CD4-positive, alpha-beta T cell (primary cell): ENCODE measurements at regions of chr11 and their contacts with region 1.

Region 1: DNA sequence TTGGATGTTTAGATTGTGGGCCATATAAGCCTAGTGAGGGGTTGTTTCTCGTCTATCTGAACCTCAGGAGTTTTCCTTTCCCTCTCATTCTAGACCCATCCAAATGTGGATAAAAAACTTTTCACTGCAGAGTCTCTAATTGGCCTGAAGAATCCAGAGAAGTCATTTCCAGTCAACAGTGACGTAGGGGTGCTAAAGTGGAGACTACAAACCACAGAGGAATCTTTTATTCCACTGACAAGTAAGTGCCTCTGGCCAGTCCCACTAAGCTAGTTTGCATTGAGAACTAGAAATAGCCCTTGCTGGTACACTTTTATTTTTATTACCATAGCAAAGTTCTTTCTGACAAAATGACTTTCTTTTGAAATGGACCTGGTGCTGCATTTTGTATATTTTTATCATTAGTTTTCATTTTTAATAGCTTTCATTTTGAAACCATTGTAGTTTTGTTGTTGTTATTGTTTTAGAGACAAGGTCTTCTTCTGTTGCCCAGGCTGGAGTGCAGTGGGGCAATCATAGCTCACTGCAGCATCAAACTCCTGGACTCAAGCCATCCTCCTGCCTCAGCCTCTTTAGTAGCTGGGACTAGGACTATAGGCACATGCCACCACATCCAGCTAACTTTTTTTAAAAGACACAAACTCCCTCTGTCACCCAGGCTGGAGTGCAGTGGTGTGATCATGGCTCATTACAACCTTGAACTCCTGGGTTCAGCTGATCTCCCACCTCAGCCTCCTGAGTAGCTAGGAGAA is 14.6 kb upstream of the PHLDB1 start:
- DNase-seq: no peak
- ATAC-seq: no peak
- H3K4me3 ChIP-seq: no peak overlapping the region
- H3K4me3 Mint-ChIP-seq: no peak overlapping the region
- H3K27ac ChIP-seq: no peak overlapping the region
- H3K27ac Mint-ChIP-seq: no peak overlapping the region
- H3K4me1 ChIP-seq: peaks cover 5% of the 10 kb centered on the region
- H3K4me1 Mint-ChIP-seq: peaks cover 16% of the 10 kb centered on the region
- H3K27me3 ChIP-seq: no peaks in the 10 kb centered on the region
- H3K27me3 Mint-ChIP-seq: no peaks in the 10 kb centered on the region
- CTCF ChIP-seq: no peak

Region 2: GRCh38 chr11:118552341-118552740 is 40.5 kb before region 1 on chr11:
- CTCF ChIA-PET with region 1: no interaction called
- POLR2A ChIA-PET with region 1: no interaction called
- intact Hi-C with region 1: no loop called
- DNase-seq: no peak
- ATAC-seq: no peak
- H3K4me3 ChIP-seq: no peak overlapping the region
- H3K4me3 Mint-ChIP-seq: no peak overlapping the region
- H3K27ac ChIP-seq: no peak overlapping the region
- H3K27ac Mint-ChIP-seq: no peak overlapping the region
- H3K4me1 ChIP-seq: no peaks in the 10 kb centered on the region
- H3K4me1 Mint-ChIP-seq: no peaks in the 10 kb centered on the region
- H3K27me3 ChIP-seq: no peaks in the 10 kb centered on the region
- H3K27me3 Mint-ChIP-seq: no peaks in the 10 kb centered on the region
- CTCF ChIP-seq: no peak

Region 3: DNA sequence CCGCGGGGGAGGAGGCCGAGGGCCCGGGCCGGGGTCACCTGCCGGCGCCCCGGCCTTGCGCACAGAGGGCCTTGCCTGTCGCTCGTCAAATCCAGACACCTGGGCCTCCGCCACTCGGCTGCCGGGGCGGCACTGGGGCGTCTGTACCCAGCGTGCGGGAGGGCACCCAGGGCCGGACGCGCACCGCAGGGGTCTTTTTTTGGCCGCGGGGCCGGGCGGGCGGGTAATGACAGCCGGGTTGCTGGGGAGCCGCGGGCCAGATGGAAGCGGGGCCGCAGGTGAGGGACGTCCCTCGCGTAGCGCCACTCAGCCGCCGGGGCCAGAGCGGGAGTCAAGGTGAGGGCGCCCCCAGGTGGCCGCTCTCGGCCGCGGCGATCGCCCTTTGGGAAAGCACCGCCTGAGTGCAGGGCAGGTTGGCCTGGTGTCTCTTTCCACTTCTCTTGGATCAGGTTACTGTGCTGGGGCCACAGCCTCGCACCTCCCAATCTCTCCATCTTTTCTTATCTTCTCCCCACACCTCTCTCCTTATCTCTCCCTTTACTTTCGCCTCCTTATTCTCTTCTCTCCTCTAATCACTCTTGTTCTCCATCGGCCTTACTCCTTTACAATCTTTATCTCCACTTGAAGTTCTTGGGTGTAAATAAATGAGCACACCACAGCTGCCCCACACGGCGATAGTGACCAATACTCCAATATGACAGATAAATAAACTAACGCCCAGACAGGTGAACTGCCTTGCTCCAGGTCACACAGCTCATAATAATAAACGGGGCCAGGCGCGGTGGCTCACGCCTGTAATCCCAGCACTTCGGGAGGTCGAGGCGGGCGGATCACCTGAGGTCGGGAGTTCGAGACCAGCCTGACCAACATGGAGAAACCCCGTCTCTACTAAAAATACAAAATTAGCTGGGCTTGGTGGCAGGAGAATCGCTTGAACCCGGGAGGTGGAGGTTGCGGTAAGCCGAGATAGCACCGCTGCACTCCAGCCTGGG is 18.3 kb after region 1 on chr11:
- CTCF ChIA-PET with region 1: interaction called, 27 read pairs
- POLR2A ChIA-PET with region 1: interaction called, 20 read pairs
- intact Hi-C with region 1: loop called (anchors 1 to 2 kb)
- DNase-seq: peak; percentile 74 to 93 (median 82)
- ATAC-seq: peak; percentile 35
- H3K4me3 ChIP-seq: peak overlapping the region; percentile 47
- H3K4me3 Mint-ChIP-seq: peak overlapping the region; percentile 85
- H3K27ac ChIP-seq: no peak overlapping the region
- H3K27ac Mint-ChIP-seq: peak overlapping the region; percentile 43
- H3K4me1 ChIP-seq: peaks cover 44% of the 10 kb centered on the region
- H3K4me1 Mint-ChIP-seq: peaks cover 24% of the 10 kb centered on the region
- H3K27me3 ChIP-seq: peaks cover 0 to 9% of the 10 kb centered on the region in 2 experiments
- H3K27me3 Mint-ChIP-seq: peaks cover 25% of the 10 kb centered on the region
- CTCF ChIP-seq: peak; percentile 96

Region 4: GRCh38 chr11:118659314-118659952 is 66.6 kb after region 1 on chr11:
- CTCF ChIA-PET with region 1: interaction called, 4 read pairs
- POLR2A ChIA-PET with region 1: no interaction called
- intact Hi-C with region 1: loop called (anchors 1 to 5 kb)
- DNase-seq: peak; percentile 80 to 91 (median 88)
- ATAC-seq: peak; percentile 100
- H3K4me3 ChIP-seq: no peak overlapping the region
- H3K4me3 Mint-ChIP-seq: no peak overlapping the region
- H3K27ac ChIP-seq: no peak overlapping the region
- H3K27ac Mint-ChIP-seq: no peak overlapping the region
- H3K4me1 ChIP-seq: peaks cover 10% of the 10 kb centered on the region
- H3K4me1 Mint-ChIP-seq: no peaks in the 10 kb centered on the region
- H3K27me3 ChIP-seq: no peaks in the 10 kb centered on the region
- H3K27me3 Mint-ChIP-seq: no peaks in the 10 kb centered on the region
- CTCF ChIP-seq: peak; percentile 94